ENCODE measurements at regions of chr13 and their contacts with region 1.

Region 1: GRCh38 chr13:80363890-80364503 is 23.1 kb upstream of the SPRY2 start:
- DNase-seq: no peak
- H3K4me3 ChIP-seq: peak overlapping the region; percentile 16 to 28 (median 22)
- H3K27ac ChIP-seq: no peak overlapping the region
- H3K4me1 ChIP-seq: peaks cover 5 to 9% (median 8%) of the 10 kb centered on the region in 4 donors
- H3K27me3 ChIP-seq: no peaks in the 10 kb centered on the region
- CTCF ChIP-seq: peak; percentile 66 to 83 (median 82)
- EP300 ChIP-seq: no peak
- POLR2A ChIP-seq: no peak

Region 2: GRCh38 chr13:79679334-79679733 is 684.7 kb before region 1 on chr13:
- intact Hi-C with region 1: loop called (anchors 5 kb)
- DNase-seq: no peak
- H3K4me3 ChIP-seq: no peak overlapping the region
- H3K27ac ChIP-seq: no peak overlapping the region
- H3K4me1 ChIP-seq: no peaks in the 10 kb centered on the region
- H3K27me3 ChIP-seq: no peaks in the 10 kb centered on the region
- CTCF ChIP-seq: peak; percentile 56 to 73 (median 68)
- EP300 ChIP-seq: no peak
- POLR2A ChIP-seq: no peak